ENCODE measurements at regions of chr6 and their contacts with region 1.

Region 1: GRCh38 chr6:26196846-26197648 is 109.8 kb downstream of the HFE start:
- DNase-seq: peak; percentile 86
- ATAC-seq: peak; percentile 48
- H3K4me3 Mint-ChIP-seq: peak overlapping the region; percentile 96
- H3K27ac Mint-ChIP-seq: peak overlapping the region; percentile 96
- H3K4me1 Mint-ChIP-seq: peaks cover 24% of the 10 kb centered on the region
- H3K27me3 Mint-ChIP-seq: no peaks in the 10 kb centered on the region
- CTCF ChIP-seq: no peak

Region 2: DNA sequence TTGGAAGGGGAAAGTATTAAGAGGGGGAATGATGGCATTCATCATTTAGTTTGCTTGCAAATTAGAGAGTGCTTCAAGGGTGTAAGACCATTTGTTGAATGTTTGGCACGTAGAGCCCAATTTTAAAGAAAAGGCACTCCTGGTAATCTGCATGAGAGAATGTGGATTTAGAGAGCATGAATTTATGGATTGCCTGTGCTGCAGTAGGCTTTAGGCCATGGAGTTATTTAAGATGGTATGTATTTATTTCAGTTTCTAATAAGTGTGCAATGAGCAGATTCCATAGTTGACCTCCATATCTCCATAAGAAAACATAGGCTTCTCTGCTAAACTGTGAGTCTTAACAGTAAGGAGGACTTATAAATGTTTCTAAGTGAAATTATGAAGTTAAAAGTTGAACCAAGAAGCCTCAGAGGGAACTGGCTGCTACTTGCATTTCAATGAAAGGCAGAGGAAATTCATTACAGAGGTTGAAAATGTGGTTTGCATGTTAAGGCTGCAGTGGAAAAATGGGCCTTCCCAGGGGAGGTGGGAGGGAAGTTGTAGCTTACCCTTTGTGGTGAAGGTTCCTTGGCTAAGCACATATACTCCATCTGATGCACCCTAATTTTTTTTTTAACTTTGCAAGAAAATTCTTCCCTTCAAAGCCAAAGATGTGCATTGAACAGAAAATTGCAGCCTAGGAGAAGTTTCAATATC is 783.7 kb before region 1 on chr6:
- CTCF ChIA-PET with region 1: no interaction called
- POLR2A ChIA-PET with region 1: no interaction called
- intact Hi-C with region 1: no loop called
- DNase-seq: no peak
- ATAC-seq: no peak
- H3K4me3 Mint-ChIP-seq: no peak overlapping the region
- H3K27ac Mint-ChIP-seq: no peak overlapping the region
- H3K4me1 Mint-ChIP-seq: peaks cover 39% of the 10 kb centered on the region
- H3K27me3 Mint-ChIP-seq: no peaks in the 10 kb centered on the region
- CTCF ChIP-seq: no peak

Region 3: GRCh38 chr6:26045065-26045927 is 151.8 kb before region 1 on chr6:
- CTCF ChIA-PET with region 1: no interaction called
- POLR2A ChIA-PET with region 1: interaction called, 49 read pairs
- intact Hi-C with region 1: no loop called
- DNase-seq: peak; percentile 85
- ATAC-seq: peak; percentile 63
- H3K4me3 Mint-ChIP-seq: peak overlapping the region; percentile 76
- H3K27ac Mint-ChIP-seq: peak overlapping the region; percentile 96
- H3K4me1 Mint-ChIP-seq: peaks cover 10% of the 10 kb centered on the region
- H3K27me3 Mint-ChIP-seq: no peaks in the 10 kb centered on the region
- CTCF ChIP-seq: no peak

Region 4: DNA sequence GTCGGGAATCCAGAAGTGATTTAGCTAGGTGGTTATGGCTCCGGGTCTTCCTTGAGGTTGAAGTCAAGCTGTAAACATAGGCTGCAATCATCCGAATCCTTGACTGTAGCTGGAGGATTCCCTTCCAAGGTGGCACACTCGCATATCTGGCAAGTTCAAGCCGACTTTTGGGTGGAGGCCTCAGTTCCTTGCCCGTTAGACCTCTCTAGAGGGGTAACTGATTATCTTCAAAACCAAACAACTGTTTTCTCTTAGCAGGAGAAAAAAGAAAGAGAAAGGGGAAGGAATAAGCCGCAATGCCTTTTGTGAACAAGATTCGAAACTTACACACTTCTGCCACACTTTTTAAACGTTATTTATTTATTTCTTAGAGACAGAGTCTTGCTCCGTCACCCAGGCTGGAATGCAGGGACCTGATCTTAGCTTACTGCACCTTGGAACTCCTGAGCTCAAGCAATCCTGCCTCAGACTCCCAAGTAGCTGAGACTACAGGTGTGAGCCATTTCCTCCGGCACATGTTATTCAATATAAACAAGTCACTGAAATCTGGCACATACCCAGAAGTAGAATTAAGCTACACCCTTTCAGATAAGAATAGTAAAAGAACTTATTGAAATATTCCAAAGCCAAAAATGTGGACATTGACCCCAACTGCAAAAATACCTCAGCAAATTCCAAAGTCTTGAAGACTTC is 33.5 kb before region 1 on chr6:
- CTCF ChIA-PET with region 1: interaction called, 4 read pairs
- POLR2A ChIA-PET with region 1: interaction called, 826 read pairs
- intact Hi-C with region 1: loop called (anchors 5 kb)
- DNase-seq: no peak
- ATAC-seq: no peak
- H3K4me3 Mint-ChIP-seq: peak overlapping the region; percentile 10
- H3K27ac Mint-ChIP-seq: peak overlapping the region; percentile 67
- H3K4me1 Mint-ChIP-seq: peaks cover 42% of the 10 kb centered on the region
- H3K27me3 Mint-ChIP-seq: peaks cover 2% of the 10 kb centered on the region
- CTCF ChIP-seq: no peak

Region 5: GRCh38 chr6:26234421-26235296 is 37.6 kb after region 1 on chr6:
- CTCF ChIA-PET with region 1: interaction called, 4 read pairs
- POLR2A ChIA-PET with region 1: interaction called, 351 read pairs
- intact Hi-C with region 1: loop called (anchors 5 kb)
- DNase-seq: peak; percentile 86
- ATAC-seq: peak; percentile 65
- H3K4me3 Mint-ChIP-seq: peak overlapping the region; percentile 75
- H3K27ac Mint-ChIP-seq: peak overlapping the region; percentile 99
- H3K4me1 Mint-ChIP-seq: peaks cover 24% of the 10 kb centered on the region
- H3K27me3 Mint-ChIP-seq: peaks cover 5% of the 10 kb centered on the region
- CTCF ChIP-seq: no peak

Region 6: DNA sequence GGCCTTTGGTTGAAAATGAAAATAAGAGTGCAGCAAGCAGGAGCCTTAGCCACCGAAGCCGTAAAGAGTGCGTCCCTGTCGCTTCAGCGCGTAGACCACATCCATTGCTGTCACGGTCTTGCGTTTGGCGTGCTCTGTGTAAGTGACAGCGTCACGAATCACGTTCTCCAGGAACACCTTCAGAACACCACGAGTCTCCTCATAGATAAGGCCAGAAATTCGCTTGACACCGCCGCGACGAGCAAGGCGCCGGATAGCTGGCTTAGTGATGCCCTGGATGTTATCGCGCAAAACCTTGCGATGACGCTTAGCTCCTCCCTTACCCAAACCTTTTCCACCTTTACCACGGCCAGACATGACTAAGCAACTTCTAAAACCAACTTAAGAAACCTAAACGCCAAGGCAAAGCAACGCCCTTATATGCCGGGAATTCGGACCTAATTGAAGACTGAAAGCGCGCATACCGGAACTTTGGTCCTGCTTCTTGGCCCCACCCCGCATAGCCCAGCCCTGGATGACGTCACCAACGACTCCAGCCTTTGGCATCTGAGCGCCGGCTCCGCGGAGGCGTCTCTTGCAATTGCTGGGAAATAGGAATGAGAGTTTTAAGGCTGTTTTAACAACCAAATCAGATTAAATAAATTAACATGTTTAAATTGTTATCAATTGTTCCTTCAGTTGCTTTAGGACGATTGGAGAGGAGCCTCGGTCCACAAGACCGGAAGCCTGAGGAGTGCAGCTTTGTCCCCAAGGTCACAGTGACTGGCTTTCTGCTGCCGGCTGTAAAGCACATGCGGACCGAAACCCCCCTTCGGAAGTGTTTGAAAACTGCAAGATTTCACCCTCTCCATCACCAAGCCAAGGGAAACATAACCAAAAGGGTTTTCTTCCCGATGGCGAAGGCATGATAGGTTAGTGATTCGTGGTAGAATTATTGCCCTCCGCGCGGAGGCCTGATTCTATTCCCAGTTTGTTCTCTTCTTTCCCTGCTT is 88.4 kb after region 1 on chr6:
- CTCF ChIA-PET with region 1: no interaction called
- POLR2A ChIA-PET with region 1: interaction called, 57 read pairs
- intact Hi-C with region 1: no loop called
- DNase-seq: peak; percentile 99
- ATAC-seq: peak; percentile 79
- H3K4me3 Mint-ChIP-seq: peak overlapping the region; percentile 88
- H3K27ac Mint-ChIP-seq: peak overlapping the region; percentile 100
- H3K4me1 Mint-ChIP-seq: peaks cover 15% of the 10 kb centered on the region
- H3K27me3 Mint-ChIP-seq: peaks cover 2% of the 10 kb centered on the region
- CTCF ChIP-seq: no peak

Region 7: GRCh38 chr6:26532699-26533531 is 335.9 kb after region 1 on chr6:
- CTCF ChIA-PET with region 1: no interaction called
- POLR2A ChIA-PET with region 1: no interaction called
- intact Hi-C with region 1: no loop called
- DNase-seq: peak; percentile 97
- ATAC-seq: peak; percentile 41
- H3K4me3 Mint-ChIP-seq: peak overlapping the region; percentile 86
- H3K27ac Mint-ChIP-seq: peak overlapping the region; percentile 88
- H3K4me1 Mint-ChIP-seq: peaks cover 42% of the 10 kb centered on the region
- H3K27me3 Mint-ChIP-seq: peaks cover 1% of the 10 kb centered on the region
- CTCF ChIP-seq: no peak